Caki2 (cell line): ENCODE measurements at regions of chr16 and their contacts with region 1.

Region 1: DNA sequence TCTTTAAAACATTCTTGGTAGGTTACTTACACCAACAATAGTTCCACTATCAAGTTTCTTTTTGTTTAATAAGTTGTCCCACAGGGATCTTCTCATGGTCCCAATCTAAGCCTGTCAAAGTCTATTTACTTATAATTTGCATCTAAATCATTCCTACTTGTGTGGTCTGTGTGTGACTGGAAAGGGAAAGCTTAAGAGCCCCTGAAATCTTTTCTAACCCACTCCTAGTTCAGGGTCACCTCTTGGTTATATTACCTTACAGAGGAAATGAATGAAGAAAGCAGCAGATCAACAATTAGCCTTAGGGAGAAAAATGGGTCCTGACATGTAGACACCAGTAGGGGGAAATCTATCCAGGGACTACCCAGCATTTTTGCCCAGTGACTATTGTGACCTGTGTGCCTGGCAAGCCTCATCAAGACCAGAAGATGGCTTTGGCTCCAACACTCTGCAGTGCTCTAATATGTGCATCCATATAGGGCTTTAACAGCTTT is 110.4 kb upstream of the HAS3 start:
- DNase-seq: peak; percentile 81

Region 2: GRCh38 chr16:69105489-69106361 is 110.7 kb after region 1 on chr16 and contains the start of gene HAS3:
- in situ Hi-C with region 1: loop called (anchors 10 kb)
- DNase-seq: peak; percentile 79
- total RNA-seq, gene HAS3: 21.1 and 35.9 TPM in 2 replicates